ENCODE measurements at regions of chr2 and their contacts with region 1.

Region 1: GRCh38 chr2:177392373-177393202 is at the start of gene AGPS:
- DNase-seq: peak; percentile 53 to 87 (median 69)
- ATAC-seq: peak; percentile 90
- H3K4me3 ChIP-seq: peak within 1 kb of the TSS; percentile 80
- H3K4me3 Mint-ChIP-seq: peak within 1 kb of the TSS; percentile 94
- H3K27ac ChIP-seq: no peak within 1 kb of the TSS
- H3K27ac Mint-ChIP-seq: peak within 1 kb of the TSS; percentile 80
- H3K4me1 ChIP-seq: peaks cover 27% of the 10 kb centered on the region
- H3K4me1 Mint-ChIP-seq: peaks cover 66% of the 10 kb centered on the region
- H3K27me3 ChIP-seq: no peaks in the 10 kb centered on the region
- H3K27me3 Mint-ChIP-seq: no peaks in the 10 kb centered on the region
- CTCF ChIP-seq: no peak
- total RNA-seq, gene AGPS: 21.5 to 23.9 TPM

Region 2: DNA sequence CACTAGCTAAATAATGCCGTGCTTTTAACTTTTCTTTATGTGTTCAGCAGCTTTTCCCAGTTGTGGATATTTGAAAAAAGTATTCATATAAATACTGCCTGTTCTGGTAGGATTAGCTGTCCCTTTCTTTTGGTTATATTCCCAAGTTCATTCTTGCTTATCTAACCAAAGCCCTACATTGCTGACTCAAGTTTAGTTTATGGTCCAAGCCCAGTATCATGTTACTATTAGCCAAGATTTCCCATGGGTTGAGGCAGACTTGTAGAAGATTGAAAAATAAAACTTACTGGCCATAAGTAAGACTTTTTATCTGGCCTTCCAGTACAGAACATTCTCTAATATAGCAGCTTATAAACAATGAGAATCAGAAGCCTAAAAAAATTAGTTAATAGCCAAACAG is 78.4 kb before region 1 on chr2:
- CTCF ChIA-PET with region 1: no interaction called
- POLR2A ChIA-PET with region 1: interaction called, 10 read pairs
- intact Hi-C with region 1: no loop called
- DNase-seq: no peak
- ATAC-seq: no peak
- H3K4me3 ChIP-seq: no peak overlapping the region
- H3K4me3 Mint-ChIP-seq: no peak overlapping the region
- H3K27ac ChIP-seq: no peak overlapping the region
- H3K27ac Mint-ChIP-seq: peak overlapping the region; percentile 90
- H3K4me1 ChIP-seq: peaks cover 19% of the 10 kb centered on the region
- H3K4me1 Mint-ChIP-seq: peaks cover 38% of the 10 kb centered on the region
- H3K27me3 ChIP-seq: no peaks in the 10 kb centered on the region
- H3K27me3 Mint-ChIP-seq: no peaks in the 10 kb centered on the region
- CTCF ChIP-seq: no peak

Region 3: DNA sequence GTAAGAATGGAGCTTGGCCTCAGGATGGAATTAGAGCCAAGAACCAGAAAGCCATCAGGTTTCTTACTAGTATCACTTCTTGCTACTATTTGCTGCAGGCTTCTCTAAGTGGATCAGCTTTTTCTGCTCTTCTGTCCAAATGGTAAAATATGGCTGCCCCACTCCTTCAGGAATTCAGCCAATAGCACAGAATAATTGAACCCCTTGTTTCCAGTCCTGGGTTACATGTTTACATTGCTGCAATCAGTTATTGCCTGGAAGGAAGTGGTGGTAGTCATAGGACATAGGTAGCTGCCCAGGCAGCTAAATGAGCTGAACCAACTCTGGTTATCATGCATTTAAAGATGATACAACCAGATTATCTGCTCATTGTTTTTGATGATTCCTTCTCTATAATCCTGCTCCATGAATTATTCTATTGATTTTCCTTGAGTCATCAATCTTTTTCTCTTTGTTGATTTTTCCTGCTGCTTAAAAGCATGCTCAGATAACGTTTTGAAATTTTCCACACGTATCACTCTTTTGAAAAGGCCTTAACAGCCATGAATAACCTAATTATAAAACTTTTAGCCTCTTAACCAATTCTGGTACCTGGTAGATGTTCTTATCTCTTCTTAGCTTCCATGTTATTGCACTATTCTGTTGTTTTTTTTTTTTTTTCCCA is 12.6 kb after region 1 on chr2:
- CTCF ChIA-PET with region 1: interaction called, 4 read pairs
- POLR2A ChIA-PET with region 1: interaction called, 11 read pairs
- intact Hi-C with region 1: no loop called
- DNase-seq: no peak
- ATAC-seq: no peak
- H3K4me3 ChIP-seq: no peak overlapping the region
- H3K4me3 Mint-ChIP-seq: no peak overlapping the region
- H3K27ac ChIP-seq: no peak overlapping the region
- H3K27ac Mint-ChIP-seq: no peak overlapping the region
- H3K4me1 ChIP-seq: no peaks in the 10 kb centered on the region
- H3K4me1 Mint-ChIP-seq: peaks cover 70% of the 10 kb centered on the region
- H3K27me3 ChIP-seq: no peaks in the 10 kb centered on the region
- H3K27me3 Mint-ChIP-seq: no peaks in the 10 kb centered on the region
- CTCF ChIP-seq: no peak

Region 4: DNA sequence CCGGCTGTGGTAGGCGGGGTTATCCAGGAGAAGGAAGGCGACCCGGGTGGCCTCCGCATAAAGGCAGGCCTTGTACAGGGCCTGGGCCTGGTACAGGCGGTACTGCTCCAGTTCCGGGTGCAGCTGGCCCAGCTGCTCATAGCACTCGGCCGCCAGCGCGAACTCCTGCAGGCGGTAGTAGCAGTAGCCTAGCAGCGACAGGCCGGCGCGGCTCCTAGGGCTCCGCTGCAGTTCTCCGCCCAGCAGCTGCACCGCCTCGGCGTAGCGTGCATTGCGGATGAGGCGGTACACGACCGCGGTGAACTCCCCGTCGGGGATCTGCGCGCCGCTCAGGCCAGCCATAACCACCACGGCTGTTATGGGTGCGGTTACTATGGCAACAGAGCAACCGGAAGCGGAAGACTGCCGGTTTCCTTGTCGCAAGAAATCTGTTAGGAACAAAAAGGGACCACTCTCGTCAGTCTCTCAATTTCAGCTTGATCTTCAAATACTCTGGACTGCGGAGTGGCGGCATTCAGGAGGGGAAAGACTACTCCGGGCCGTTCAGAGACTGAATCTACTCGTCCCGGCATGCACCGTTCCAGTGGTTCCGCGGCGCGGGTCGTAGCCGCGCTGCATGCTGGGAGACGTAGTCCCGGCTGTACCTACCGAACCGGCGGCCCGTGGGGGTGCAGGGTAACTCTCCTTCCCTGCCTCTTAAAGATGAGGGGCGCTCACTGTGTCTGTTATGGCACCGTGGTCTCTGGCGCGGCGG is 160.0 kb after region 1 on chr2:
- CTCF ChIA-PET with region 1: no interaction called
- POLR2A ChIA-PET with region 1: interaction called, 3 read pairs
- intact Hi-C with region 1: loop called in 1 of 2 experiments (anchors 5 kb)
- DNase-seq: peak; percentile 80 to 97 (median 88)
- ATAC-seq: peak; percentile 91
- H3K4me3 ChIP-seq: peak overlapping the region; percentile 71
- H3K4me3 Mint-ChIP-seq: peak overlapping the region; percentile 99
- H3K27ac ChIP-seq: peak overlapping the region; percentile 93 to 99
- H3K27ac Mint-ChIP-seq: peak overlapping the region; percentile 98
- H3K4me1 ChIP-seq: peaks cover 13% of the 10 kb centered on the region
- H3K4me1 Mint-ChIP-seq: peaks cover 17% of the 10 kb centered on the region
- H3K27me3 ChIP-seq: no peaks in the 10 kb centered on the region
- H3K27me3 Mint-ChIP-seq: peaks cover 3% of the 10 kb centered on the region
- CTCF ChIP-seq: no peak

Region 5: GRCh38 chr2:177618255-177619253 is 226.0 kb after region 1 on chr2:
- CTCF ChIA-PET with region 1: no interaction called
- POLR2A ChIA-PET with region 1: no interaction called
- intact Hi-C with region 1: loop called in 1 of 2 experiments (anchors 5 kb)
- DNase-seq: peak; percentile 83 to 96 (median 89)
- ATAC-seq: peak; percentile 89
- H3K4me3 ChIP-seq: peak overlapping the region; percentile 72
- H3K4me3 Mint-ChIP-seq: peak overlapping the region; percentile 96
- H3K27ac ChIP-seq: peak overlapping the region; percentile 89 to 98
- H3K27ac Mint-ChIP-seq: peak overlapping the region; percentile 94
- H3K4me1 ChIP-seq: peaks cover 14% of the 10 kb centered on the region
- H3K4me1 Mint-ChIP-seq: peaks cover 8% of the 10 kb centered on the region
- H3K27me3 ChIP-seq: no peaks in the 10 kb centered on the region
- H3K27me3 Mint-ChIP-seq: peaks cover 12% of the 10 kb centered on the region
- CTCF ChIP-seq: no peak